HCT116 (cell line): ENCODE measurements at regions of chr5 and their contacts with region 1.

Region 1: GRCh38 chr5:151002250-151002649 is 18.1 kb upstream of the GPX3 start:
- DNase-seq: peak; percentile 28
- ATAC-seq: peak; percentile 68
- H3K4me3 ChIP-seq: no peak overlapping the region
- H3K27ac ChIP-seq: no peak overlapping the region
- H3K4me1 ChIP-seq: peaks cover 0 to 16% of the 10 kb centered on the region in 2 experiments; a peak in 2 of 4 replicates
- H3K27me3 ChIP-seq: peaks cover 10% of the 10 kb centered on the region; the same call in 1 of the 2 replicates
- CTCF ChIP-seq: peak; percentile 25 to 87 (median 59); a peak in 5 of 6 replicates
- POLR2A ChIP-seq: no peak
- RAD21 ChIP-seq: peak; percentile 92

Region 2: DNA sequence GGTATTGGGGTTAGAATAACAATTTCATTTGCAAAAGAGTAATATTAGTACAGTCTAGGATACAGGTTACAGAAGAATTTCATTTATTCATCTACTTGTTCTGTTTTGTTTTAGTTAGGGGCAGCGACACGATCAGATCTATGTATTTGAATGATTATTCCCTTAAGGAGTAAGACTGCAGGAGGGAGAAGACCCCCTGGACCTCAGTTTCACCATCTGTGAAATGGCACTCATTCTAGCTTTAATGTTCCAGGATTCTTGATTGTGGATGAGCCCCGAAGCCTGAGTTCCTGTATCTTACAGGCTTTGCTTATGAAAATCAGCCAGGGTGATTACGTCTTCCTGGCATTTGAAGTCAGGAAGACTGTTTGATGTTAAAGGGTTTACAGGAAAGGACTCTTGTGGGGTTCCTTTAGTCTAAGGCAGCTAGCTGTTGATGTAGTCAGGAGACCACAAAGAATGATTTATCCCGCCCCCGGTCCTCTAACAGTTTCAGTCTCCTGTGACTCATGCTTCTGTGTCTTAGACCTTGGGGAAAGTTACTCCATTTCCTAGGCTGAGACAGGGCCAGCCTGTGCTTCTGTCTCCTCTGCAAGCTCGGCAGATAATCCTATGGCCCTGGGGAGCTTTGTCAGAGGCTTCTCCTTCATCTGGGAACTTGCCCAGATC is 212.2 kb before region 1 on chr5:
- CTCF ChIA-PET with region 1: no interaction called
- POLR2A ChIA-PET with region 1: no interaction called
- RAD21 ChIA-PET with region 1: no interaction called
- intact Hi-C with region 1: no loop called
- DNase-seq: peak; percentile 85
- ATAC-seq: peak; percentile 96
- H3K4me3 ChIP-seq: peak overlapping the region; percentile 3 to 45
- H3K27ac ChIP-seq: peak overlapping the region; percentile 79
- H3K4me1 ChIP-seq: peaks cover 59 to 60% of the 10 kb centered on the region in 2 experiments
- H3K27me3 ChIP-seq: no peaks in the 10 kb centered on the region
- CTCF ChIP-seq: no peak
- POLR2A ChIP-seq: no peak
- RAD21 ChIP-seq: peak; percentile 30; the same call in 1 of the 2 replicates

Region 3: GRCh38 chr5:151051066-151051930 is 49.0 kb after region 1 on chr5:
- CTCF ChIA-PET with region 1: interaction called, 21 read pairs
- POLR2A ChIA-PET with region 1: no interaction called
- RAD21 ChIA-PET with region 1: interaction called in 1 of 2 experiments, 3 read pairs
- intact Hi-C with region 1: loop called (anchors 1 kb)
- DNase-seq: peak; percentile 56
- ATAC-seq: peak; percentile 89
- H3K4me3 ChIP-seq: no peak overlapping the region
- H3K27ac ChIP-seq: no peak overlapping the region
- H3K4me1 ChIP-seq: no peaks in the 10 kb centered on the region
- H3K27me3 ChIP-seq: no peaks in the 10 kb centered on the region
- CTCF ChIP-seq: peak; percentile 88 to 96 (median 95)
- POLR2A ChIP-seq: no peak
- RAD21 ChIP-seq: peak; percentile 93

Region 4: GRCh38 chr5:151157426-151158286 is 155.4 kb after region 1 on chr5 and contains the start of gene ANXA6:
- CTCF ChIA-PET with region 1: no interaction called
- POLR2A ChIA-PET with region 1: no interaction called
- RAD21 ChIA-PET with region 1: no interaction called
- intact Hi-C with region 1: loop called (anchors 2 kb)
- DNase-seq: peak; percentile 45
- ATAC-seq: peak; percentile 96
- H3K4me3 ChIP-seq: peak within 1 kb of the TSS; percentile 71 to 74
- H3K27ac ChIP-seq: peak within 1 kb of the TSS; percentile 45
- H3K4me1 ChIP-seq: peaks cover 19 to 36% of the 10 kb centered on the region in 2 experiments
- H3K27me3 ChIP-seq: no peaks in the 10 kb centered on the region
- CTCF ChIP-seq: no peak
- POLR2A ChIP-seq: peak; percentile 71
- RAD21 ChIP-seq: no peak
- total RNA-seq, gene ANXA6: 71.9 TPM

Region 5: DNA sequence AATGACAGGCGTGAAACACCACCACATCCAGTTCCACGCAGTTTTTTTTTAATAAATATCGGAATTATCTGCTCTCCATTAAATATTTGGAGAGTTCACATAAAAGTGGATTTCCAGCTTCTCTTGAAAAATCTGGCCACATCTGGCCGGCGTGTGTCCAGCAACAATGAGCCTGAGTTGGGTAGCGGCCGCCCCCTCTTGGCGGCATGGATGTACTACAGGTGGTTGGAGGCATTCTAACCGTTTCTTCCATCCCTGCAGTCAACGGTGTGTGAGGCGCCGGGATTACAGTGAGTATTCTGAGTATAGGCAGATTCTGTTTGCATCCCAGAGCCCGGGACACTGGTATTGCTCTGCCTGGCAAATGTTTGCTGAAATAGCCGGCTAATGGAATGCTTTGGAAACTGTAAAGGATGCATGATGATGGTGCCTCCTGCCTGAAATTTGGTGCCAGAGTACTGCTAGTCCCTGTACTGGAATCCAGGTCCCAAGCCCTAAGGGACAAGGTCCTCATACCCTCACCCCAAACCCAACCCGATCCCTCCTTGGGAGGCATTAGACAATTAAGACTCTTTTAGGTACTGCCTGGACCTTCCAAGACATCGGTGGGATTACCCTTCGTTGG is 237.1 kb after region 1 on chr5:
- CTCF ChIA-PET with region 1: interaction called, 4 read pairs
- POLR2A ChIA-PET with region 1: no interaction called
- RAD21 ChIA-PET with region 1: no interaction called
- intact Hi-C with region 1: loop called (anchors 10 kb)
- DNase-seq: peak; percentile 34
- ATAC-seq: peak; percentile 95
- H3K4me3 ChIP-seq: no peak overlapping the region
- H3K27ac ChIP-seq: no peak overlapping the region
- H3K4me1 ChIP-seq: peaks cover 8 to 9% of the 10 kb centered on the region in 2 experiments; a peak in 2 of 4 replicates
- H3K27me3 ChIP-seq: no peaks in the 10 kb centered on the region
- CTCF ChIP-seq: peak; percentile 83 to 93 (median 90)
- POLR2A ChIP-seq: no peak
- RAD21 ChIP-seq: peak; percentile 91

Region 6: GRCh38 chr5:151523335-151523734 is 521.1 kb after region 1 on chr5:
- CTCF ChIA-PET with region 1: interaction called, 5 read pairs
- POLR2A ChIA-PET with region 1: no interaction called
- RAD21 ChIA-PET with region 1: no interaction called
- intact Hi-C with region 1: loop called (anchors 10 kb)
- DNase-seq: peak; percentile 39
- ATAC-seq: peak; percentile 98
- H3K4me3 ChIP-seq: no peak overlapping the region
- H3K27ac ChIP-seq: no peak overlapping the region
- H3K4me1 ChIP-seq: no peaks in the 10 kb centered on the region
- H3K27me3 ChIP-seq: no peaks in the 10 kb centered on the region
- CTCF ChIP-seq: peak; percentile 78 to 81 (median 81)
- POLR2A ChIP-seq: no peak
- RAD21 ChIP-seq: peak; percentile 89